ENCODE measurements at regions of chr18 and their contacts with region 1.

Region 1: GRCh38 chr18:11995445-11996189 is 14.3 kb downstream of the IMPA2 start:
- DNase-seq: peak; percentile 79 to 87 (median 84)
- ATAC-seq: peak; percentile 80 to 92 (median 86)
- H3K4me3 ChIP-seq: no peak overlapping the region
- H3K27ac ChIP-seq: peak overlapping the region in 10 of 12 donors; percentile 28 to 72 (median 58)
- H3K4me1 ChIP-seq: peaks cover 0 to 42% (median 24%) of the 10 kb centered on the region in 12 donors
- H3K27me3 ChIP-seq: no peaks in the 10 kb centered on the region
- CTCF ChIP-seq: peak; percentile 59 to 91 (median 80)
- POLR2A ChIP-seq: peak in 1 of 2 donors; percentile 21

Region 2: GRCh38 chr18:11937874-11938478 is 57.6 kb before region 1 on chr18:
- intact Hi-C with region 1: loop called (anchors 1 to 2 kb)
- DNase-seq: peak; percentile 57 to 80 (median 71)
- ATAC-seq: peak in 3 of 4 donors; percentile 66 to 81 (median 76)
- H3K4me3 ChIP-seq: no peak overlapping the region
- H3K27ac ChIP-seq: no peak overlapping the region
- H3K4me1 ChIP-seq: no peaks in the 10 kb centered on the region
- H3K27me3 ChIP-seq: no peaks in the 10 kb centered on the region
- CTCF ChIP-seq: peak; percentile 70 to 95 (median 82)
- POLR2A ChIP-seq: no peak

Region 3: GRCh38 chr18:12011957-12012549 is 16.4 kb after region 1 on chr18:
- intact Hi-C with region 1: loop called in 1 of 10 experiments (anchors 1 kb)
- DNase-seq: peak in 4 of 5 donors; percentile 53 to 65 (median 60)
- ATAC-seq: peak in 3 of 4 donors; percentile 49 to 59 (median 55)
- H3K4me3 ChIP-seq: no peak overlapping the region
- H3K27ac ChIP-seq: peak overlapping the region in 10 of 12 donors; percentile 16 to 82 (median 64)
- H3K4me1 ChIP-seq: peaks cover 0 to 41% (median 9%) of the 10 kb centered on the region in 12 donors
- H3K27me3 ChIP-seq: no peaks in the 10 kb centered on the region
- CTCF ChIP-seq: no peak
- POLR2A ChIP-seq: no peak

Region 4: GRCh38 chr18:12408247-12408869 is 412.7 kb after region 1 on chr18:
- intact Hi-C with region 1: no loop called
- DNase-seq: peak in 2 of 5 donors; percentile 29 to 64
- ATAC-seq: no peak
- H3K4me3 ChIP-seq: peak overlapping the region; percentile 31 to 84 (median 64)
- H3K27ac ChIP-seq: peak overlapping the region in 11 of 12 donors; percentile 74 to 90 (median 85)
- H3K4me1 ChIP-seq: peaks cover 0 to 26% (median 8%) of the 10 kb centered on the region in 12 donors
- H3K27me3 ChIP-seq: peaks cover 0 to 12% (median 0%) of the 10 kb centered on the region in 9 donors
- CTCF ChIP-seq: no peak
- POLR2A ChIP-seq: no peak

Measured in heart left ventricle (tissue), 16 donors.